Posterior vena cava (tissue), 2 donors: ENCODE measurements at regions of chr10 and their contacts with region 1.

Region 1: DNA sequence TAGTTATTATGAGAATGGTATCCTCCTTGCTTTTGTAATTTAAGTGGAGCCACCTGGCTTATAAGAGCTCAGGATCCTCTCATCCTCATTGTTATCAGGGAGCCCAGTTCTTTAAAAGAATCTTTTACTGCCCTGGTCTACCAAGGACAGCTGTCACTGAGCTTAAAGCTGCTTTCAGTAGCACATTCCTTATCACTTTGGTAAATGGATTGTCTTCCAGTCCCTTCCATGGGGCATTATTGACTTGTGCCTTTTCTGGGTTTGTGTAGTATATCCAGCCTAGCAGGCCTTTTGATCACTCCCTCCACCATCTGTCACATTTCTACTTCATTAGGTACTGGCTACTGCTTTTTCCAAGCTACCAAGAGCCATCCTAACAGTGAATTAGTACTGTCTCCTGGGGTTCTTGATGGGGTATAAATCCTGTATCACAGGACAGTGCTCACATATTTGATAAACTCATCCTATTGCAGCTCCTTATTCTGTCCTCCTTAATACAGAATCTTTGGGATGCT is 208.9 kb downstream of the TMEM26 start:
- DNase-seq: no peak

Region 2: DNA sequence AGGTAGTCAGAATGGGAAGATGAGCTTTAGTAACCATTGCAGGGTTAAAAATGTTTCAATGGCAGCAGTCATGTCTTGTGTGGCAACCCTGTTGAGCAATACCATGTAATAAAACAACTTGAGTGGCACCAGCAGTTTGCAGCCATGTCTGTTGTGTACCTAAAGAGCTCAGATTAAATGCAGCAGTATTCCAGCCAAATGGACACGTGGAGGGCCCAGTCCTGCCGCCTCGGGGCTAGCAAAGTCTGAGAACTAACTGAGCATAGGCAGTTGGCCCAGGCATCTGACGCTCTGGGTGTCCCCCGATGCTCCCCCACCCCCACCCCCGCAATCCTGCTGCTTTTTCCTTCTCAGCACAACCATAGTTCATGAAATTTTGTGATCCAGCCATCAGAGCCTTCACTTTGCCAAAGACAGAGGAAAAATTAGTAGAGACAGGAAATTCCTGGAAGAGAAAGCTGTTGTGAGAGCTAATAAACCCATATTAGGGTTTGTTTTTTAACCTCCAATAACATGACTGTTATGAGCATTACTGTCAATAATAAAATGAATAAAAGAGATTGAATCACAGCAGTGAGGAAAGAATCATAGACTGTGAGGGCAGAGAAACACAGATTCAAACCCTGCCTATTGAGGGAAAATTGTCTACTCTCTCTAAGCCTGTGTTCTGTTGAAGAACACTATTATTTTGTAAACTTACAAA is 79.7 kb before region 1 on chr10:
- intact Hi-C with region 1: no loop called
- DNase-seq: peak; percentile 83

Region 3: DNA sequence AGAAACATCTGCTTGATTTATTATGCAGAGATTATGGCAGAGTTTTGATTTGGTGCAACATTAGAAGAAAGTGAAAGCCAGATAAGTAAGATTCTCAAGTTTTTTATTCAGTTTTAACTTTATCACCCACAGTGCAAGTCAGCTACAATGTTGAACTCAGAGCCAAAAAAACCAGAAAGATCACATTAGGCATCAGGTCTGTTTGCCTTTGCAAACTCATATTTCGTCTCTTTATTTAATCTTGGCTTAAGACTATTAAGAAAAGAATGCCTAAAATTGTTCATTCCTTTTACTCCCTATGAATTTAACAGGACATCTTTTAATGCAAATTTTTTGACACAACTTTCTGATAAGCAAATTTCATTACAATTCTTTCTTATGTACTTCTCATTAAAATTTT is 284.9 kb after region 1 on chr10:
- intact Hi-C with region 1: loop called (anchors 5 to 10 kb)
- DNase-seq: no peak